ENCODE measurements at regions of chr5 and their contacts with region 1.

Region 1: GRCh38 chr5:179806250-179807222 is at the start of gene MGAT4B:
- DNase-seq: peak in 25 of 35 experiments; percentile 33 to 74 (median 50)
- ATAC-seq: peak; percentile 76 to 81 (median 80)
- H3K4me3 ChIP-seq: peak within 1 kb of the TSS; percentile 58 to 63
- H3K4me3 Mint-ChIP-seq: peak within 1 kb of the TSS; percentile 67 to 84 (median 80)
- H3K27ac ChIP-seq: peak within 1 kb of the TSS; percentile 61
- H3K27ac Mint-ChIP-seq: peak within 1 kb of the TSS in 1 of 2 donors; percentile 66
- H3K4me1 ChIP-seq: peaks cover 18 to 53% of the 10 kb centered on the region in 2 experiments
- H3K4me1 Mint-ChIP-seq: peaks cover 27 to 37% (median 36%) of the 10 kb centered on the region in 3 donors
- H3K27me3 ChIP-seq: no peaks in the 10 kb centered on the region
- H3K27me3 Mint-ChIP-seq: no peaks in the 10 kb centered on the region
- total RNA-seq, gene MGAT4B: 119 to 159 (median 132) TPM

Region 2: GRCh38 chr5:179749857-179750508 is 56.6 kb before region 1 on chr5:
- CTCF ChIA-PET with region 1: no interaction called
- POLR2A ChIA-PET with region 1: no interaction called
- DNase-seq: no peak
- ATAC-seq: no peak
- H3K4me3 ChIP-seq: no peak overlapping the region
- H3K4me3 Mint-ChIP-seq: no peak overlapping the region
- H3K27ac ChIP-seq: no peak overlapping the region
- H3K27ac Mint-ChIP-seq: no peak overlapping the region
- H3K4me1 ChIP-seq: peaks cover 9 to 20% of the 10 kb centered on the region in 2 experiments
- H3K4me1 Mint-ChIP-seq: peaks cover 55 to 60% (median 56%) of the 10 kb centered on the region in 3 donors
- H3K27me3 ChIP-seq: no peaks in the 10 kb centered on the region
- H3K27me3 Mint-ChIP-seq: no peaks in the 10 kb centered on the region

Region 3: GRCh38 chr5:179763215-179763945 is 43.2 kb before region 1 on chr5:
- CTCF ChIA-PET with region 1: interaction called in 1 of 2 experiments, 10 read pairs
- POLR2A ChIA-PET with region 1: no interaction called
- DNase-seq: peak; percentile 4 to 76 (median 43)
- ATAC-seq: peak; percentile 56 to 71 (median 66)
- H3K4me3 ChIP-seq: no peak overlapping the region
- H3K4me3 Mint-ChIP-seq: peak overlapping the region in 1 of 3 donors; percentile 28
- H3K27ac ChIP-seq: no peak overlapping the region
- H3K27ac Mint-ChIP-seq: peak overlapping the region; percentile 27 to 87
- H3K4me1 ChIP-seq: peaks cover 11 to 30% of the 10 kb centered on the region in 2 experiments
- H3K4me1 Mint-ChIP-seq: peaks cover 54 to 69% (median 58%) of the 10 kb centered on the region in 3 donors
- H3K27me3 ChIP-seq: no peaks in the 10 kb centered on the region
- H3K27me3 Mint-ChIP-seq: no peaks in the 10 kb centered on the region

Region 4: GRCh38 chr5:180161420-180162303 is 355.1 kb after region 1 on chr5:
- CTCF ChIA-PET with region 1: no interaction called
- POLR2A ChIA-PET with region 1: no interaction called
- DNase-seq: no peak
- ATAC-seq: no peak
- H3K4me3 ChIP-seq: no peak overlapping the region
- H3K4me3 Mint-ChIP-seq: no peak overlapping the region
- H3K27ac ChIP-seq: no peak overlapping the region
- H3K27ac Mint-ChIP-seq: no peak overlapping the region
- H3K4me1 ChIP-seq: no peaks in the 10 kb centered on the region
- H3K4me1 Mint-ChIP-seq: peaks cover 0 to 7% (median 0%) of the 10 kb centered on the region in 3 donors
- H3K27me3 ChIP-seq: peaks cover 0 to 21% of the 10 kb centered on the region in 2 experiments
- H3K27me3 Mint-ChIP-seq: peaks cover 16 to 49% of the 10 kb centered on the region in 2 donors